PC-9 (cell line): ENCODE measurements at regions of chr1 and their contacts with region 1.

Region 1: DNA sequence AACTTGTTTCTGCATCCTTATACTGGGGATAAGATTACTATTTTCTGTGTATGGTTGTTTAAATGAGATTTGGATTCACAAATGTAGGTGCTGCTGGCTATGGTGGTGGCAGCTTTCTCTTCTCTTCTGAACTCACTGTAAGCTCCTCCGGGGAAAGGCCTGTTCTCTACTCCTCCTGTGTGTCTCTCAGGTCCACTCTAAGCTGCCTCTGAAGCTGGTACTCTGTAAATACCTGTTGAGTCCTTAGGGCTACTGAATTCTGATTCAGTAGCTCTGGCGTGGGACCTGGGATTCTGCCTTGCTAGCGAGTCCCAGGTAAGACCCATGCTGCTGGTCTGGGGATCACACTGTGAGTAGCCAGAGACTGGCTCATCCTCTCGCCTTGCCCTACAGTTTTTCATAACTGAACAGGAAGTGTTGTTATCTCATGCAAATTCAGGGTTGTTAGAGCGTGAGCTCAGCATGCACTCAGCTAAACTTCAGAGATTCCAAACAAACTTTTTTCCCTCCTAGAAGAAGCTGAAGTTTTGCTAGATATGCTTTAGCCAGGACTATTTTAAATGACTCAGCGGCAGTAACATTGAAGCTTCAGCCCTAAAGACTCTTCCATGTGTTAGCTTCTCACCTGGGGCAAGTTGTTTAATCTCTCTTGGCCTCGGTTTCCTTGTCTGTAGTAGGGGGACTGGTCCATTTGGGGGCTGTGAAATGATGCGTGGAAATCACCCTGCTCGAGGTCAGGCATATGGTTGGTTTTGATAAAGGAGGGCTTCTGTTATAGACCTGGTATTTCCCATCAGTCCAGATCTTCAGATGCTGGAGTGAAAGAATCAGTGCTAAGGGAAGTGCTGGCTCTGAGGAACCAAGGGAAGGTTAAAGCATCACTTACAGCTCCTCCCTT is 271.5 kb upstream of the TMEM51 start:
- DNase-seq: no peak
- H3K4me3 ChIP-seq: no peak overlapping the region
- H3K27ac ChIP-seq: no peak overlapping the region
- H3K4me1 ChIP-seq: no peaks in the 10 kb centered on the region
- H3K27me3 ChIP-seq: no peaks in the 10 kb centered on the region
- CTCF ChIP-seq: no peak

Region 2: GRCh38 chr1:13667691-13668090 is 1214.3 kb before region 1 on chr1:
- CTCF ChIA-PET with region 1: interaction called, 10 read pairs
- POLR2A ChIA-PET with region 1: no interaction called
- intact Hi-C with region 1: no loop called
- DNase-seq: no peak
- H3K4me3 ChIP-seq: no peak overlapping the region
- H3K27ac ChIP-seq: no peak overlapping the region
- H3K4me1 ChIP-seq: no peaks in the 10 kb centered on the region
- H3K27me3 ChIP-seq: peaks cover 7% of the 10 kb centered on the region; the same call in 1 of the 2 replicates
- CTCF ChIP-seq: no peak

Region 3: DNA sequence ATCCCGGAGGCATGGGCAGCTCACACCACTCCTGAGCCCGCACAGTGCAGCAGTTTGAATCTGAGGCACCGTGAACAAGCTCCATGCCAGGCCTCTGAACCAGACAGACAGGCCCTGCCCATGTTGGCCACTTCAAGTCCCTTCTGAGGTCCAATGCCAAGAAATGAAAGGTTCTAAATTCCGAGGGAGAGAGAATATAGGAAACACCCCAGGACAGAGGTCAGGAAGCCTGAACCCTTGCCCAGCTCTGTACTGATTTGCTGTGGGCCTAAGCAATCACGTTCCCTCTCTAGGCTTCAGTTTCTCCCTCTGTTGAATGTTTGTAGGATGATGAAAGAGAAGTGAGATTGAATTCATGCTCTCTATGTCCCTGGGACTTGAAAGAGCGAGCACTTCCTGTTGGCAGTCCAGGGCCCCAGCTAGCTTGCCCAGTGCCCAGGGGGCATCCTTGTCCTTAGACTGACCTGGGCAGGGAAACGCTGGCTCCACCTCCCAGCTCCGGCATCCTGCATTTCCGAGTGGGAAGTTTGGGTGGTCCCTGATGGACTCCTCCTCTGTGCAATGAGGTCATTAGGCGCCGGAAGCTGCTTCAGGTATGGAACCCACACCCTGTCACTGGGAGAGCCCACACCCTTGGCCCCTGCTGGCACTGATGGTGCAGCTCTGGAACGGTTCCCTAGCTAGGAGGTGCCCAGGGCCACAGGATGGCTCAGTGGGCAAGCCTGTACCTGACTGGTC is 29.1 kb after region 1 on chr1:
- CTCF ChIA-PET with region 1: no interaction called
- POLR2A ChIA-PET with region 1: no interaction called
- intact Hi-C with region 1: loop called (anchors 1 kb)
- DNase-seq: peak; percentile 51 to 74
- H3K4me3 ChIP-seq: no peak overlapping the region
- H3K27ac ChIP-seq: peak overlapping the region; percentile 39; the same call in 1 of the 2 replicates
- H3K4me1 ChIP-seq: peaks cover 7% of the 10 kb centered on the region; the same call in 1 of the 2 replicates
- H3K27me3 ChIP-seq: no peaks in the 10 kb centered on the region
- CTCF ChIP-seq: no peak

Region 4: DNA sequence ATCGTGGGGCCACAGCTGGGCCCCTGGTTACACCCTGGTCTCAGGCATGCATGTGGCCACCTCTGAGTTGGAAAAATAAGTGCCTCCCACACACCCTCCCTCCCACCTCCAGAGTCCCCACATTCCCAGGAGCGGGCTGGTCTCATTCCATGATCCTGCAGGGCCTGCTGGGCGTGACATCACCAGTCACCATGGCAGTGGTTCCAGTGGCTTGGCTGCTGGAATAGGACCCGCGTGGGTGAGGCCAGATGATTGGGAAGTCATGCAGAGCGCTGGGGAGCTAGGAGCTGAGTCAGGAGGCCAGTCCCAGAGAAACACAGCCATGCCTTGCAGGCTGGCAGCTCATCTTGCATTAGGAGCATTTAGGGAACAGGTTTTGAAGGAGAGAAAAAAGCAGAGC is 146.1 kb after region 1 on chr1:
- CTCF ChIA-PET with region 1: interaction called, 13 read pairs
- POLR2A ChIA-PET with region 1: no interaction called
- intact Hi-C with region 1: no loop called
- DNase-seq: peak; percentile 42 to 71
- H3K4me3 ChIP-seq: no peak overlapping the region
- H3K27ac ChIP-seq: no peak overlapping the region
- H3K4me1 ChIP-seq: no peaks in the 10 kb centered on the region
- H3K27me3 ChIP-seq: no peaks in the 10 kb centered on the region
- CTCF ChIP-seq: no peak